GM12878 (cell line): ENCODE measurements at regions of chr1 and their contacts with region 1.

Region 1: DNA sequence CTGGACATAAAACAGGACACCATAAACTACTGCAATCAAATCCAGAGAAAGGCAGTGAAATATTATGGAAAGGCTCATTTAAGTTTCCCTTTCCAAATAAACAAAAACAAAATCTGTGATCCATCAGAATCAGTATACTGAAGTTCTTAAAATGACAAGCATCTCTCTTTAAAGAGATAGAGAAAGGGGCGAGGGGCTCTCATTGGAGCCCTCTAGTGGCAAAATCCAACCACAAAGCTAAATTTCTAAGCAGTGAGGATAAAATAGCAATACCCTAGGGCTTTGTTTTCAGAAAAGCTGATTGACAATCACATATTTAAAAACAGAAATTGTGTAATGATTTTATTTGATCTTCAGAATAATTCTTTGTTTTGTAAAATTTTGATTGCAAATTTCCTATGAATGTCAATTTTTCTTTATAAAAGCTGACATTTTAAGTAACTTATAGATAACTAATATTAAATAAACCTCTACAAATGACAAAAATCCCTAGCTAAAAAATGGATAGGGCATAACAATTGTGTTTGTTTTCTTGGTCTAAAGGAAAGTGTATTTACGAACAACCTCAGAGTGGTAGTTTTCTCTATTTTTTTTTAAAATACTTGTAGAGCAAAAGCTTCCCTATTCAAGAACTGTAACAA is 138.2 kb downstream of the COL24A1 start:
- DNase-seq: no peak
- ATAC-seq: peak; percentile 80
- H3K4me3 ChIP-seq: no peak overlapping the region
- H3K27ac ChIP-seq: no peak overlapping the region; the same call in 1 of the 2 replicates
- H3K4me1 ChIP-seq: peaks cover 16% of the 10 kb centered on the region; the same call in 1 of the 2 replicates
- H3K27me3 ChIP-seq: no peaks in the 10 kb centered on the region
- CTCF ChIP-seq: peak; percentile 68 to 75 (median 71)
- EP300 ChIP-seq: no peak
- POLR2A ChIP-seq: no peak
- RAD21 ChIP-seq: peak; percentile 81

Region 2: DNA sequence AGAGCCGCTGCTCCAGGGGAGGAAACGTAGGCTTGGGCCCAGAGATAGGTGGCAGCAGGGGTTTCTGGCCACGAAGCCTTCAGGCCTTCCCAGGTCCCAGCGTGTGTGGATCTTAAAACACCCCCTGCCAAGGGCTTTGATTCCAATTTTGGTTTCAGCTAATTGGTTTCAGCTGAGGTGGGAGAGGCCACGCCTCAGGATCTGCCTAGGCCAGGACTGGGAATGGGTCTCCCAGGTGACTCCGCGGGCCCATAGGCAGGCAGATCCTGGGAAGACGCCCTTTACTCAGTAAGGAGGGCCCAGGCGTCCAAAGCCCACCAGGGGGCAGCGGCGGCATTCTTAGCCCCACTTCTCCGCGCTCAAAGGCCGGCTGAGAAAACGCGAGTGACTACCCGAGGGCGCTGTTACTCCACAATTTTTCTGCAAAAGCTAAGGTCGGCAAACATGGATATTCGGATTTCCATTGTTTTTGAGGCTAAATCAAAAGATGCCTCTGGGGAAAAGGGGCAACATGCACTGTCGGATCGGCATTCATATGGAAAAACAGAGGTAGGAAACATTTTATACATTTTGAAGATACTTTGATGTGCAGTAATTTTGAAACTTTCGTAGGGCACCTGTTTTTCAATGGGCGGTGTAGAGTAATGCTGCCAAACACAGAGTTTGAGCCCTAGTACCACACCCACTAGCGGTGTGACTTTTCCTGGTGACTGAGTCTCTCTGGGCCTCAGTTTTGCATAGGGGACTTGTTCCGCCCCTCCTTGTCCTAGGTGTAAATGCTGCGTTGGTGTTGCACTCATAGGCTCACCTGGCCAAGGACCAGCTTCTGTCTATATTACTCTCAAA is 710.2 kb before region 1 on chr1:
- CTCF ChIA-PET with region 1: interaction called, 12 read pairs
- POLR2A ChIA-PET with region 1: no interaction called
- RAD21 ChIA-PET with region 1: interaction called, 6 read pairs
- SMC1A ChIA-PET with region 1: interaction called, 9 read pairs
- in situ Hi-C with region 1: loop called (anchors 25 kb)
- intact Hi-C with region 1: loop called (anchors 2 kb)
- DNase-seq: no peak
- ATAC-seq: peak; percentile 98
- H3K4me3 ChIP-seq: no peak overlapping the region
- H3K27ac ChIP-seq: no peak overlapping the region
- H3K4me1 ChIP-seq: peaks cover 5% of the 10 kb centered on the region
- H3K27me3 ChIP-seq: peaks cover 0 to 4% of the 10 kb centered on the region in 2 experiments; a peak in 2 of 4 replicates
- CTCF ChIP-seq: peak; percentile 88 to 91 (median 90)
- EP300 ChIP-seq: no peak
- POLR2A ChIP-seq: no peak
- RAD21 ChIP-seq: peak; percentile 86

Region 3: DNA sequence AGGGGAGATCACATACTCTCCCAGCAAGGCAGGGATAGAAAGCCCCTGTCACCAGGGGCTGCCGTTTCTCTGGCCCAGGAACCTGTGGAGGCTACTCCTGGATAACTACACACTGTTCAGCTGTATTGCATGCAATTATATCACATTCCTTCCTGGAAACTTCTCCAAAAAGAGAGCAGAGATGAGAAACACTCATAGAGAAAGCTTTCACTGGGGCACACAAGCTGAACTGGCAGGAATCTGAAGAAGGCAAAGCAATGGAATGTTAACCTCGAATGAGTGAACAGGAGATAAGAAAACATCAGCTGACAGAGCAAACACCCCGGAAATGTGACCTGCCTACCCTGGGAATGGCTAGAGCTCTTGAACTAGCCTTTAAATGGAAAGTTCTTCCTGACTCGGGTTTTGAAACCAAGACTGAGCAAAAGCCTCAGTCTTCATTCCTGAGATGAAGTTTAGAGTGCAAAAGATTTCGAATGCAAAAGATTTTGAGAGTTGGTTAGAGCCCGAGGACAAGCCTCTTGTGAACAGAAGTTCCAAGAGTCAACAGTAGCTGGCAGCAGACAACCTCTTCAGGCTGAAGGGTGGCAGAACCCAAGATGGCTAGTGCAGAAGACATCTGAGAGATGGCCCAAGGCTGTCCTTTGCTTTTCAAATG is 405.6 kb before region 1 on chr1:
- CTCF ChIA-PET with region 1: interaction called, 10 read pairs
- POLR2A ChIA-PET with region 1: no interaction called
- RAD21 ChIA-PET with region 1: no interaction called
- SMC1A ChIA-PET with region 1: interaction called, 4 read pairs
- in situ Hi-C with region 1: no loop called
- intact Hi-C with region 1: loop called (anchors 5 kb)
- DNase-seq: no peak
- ATAC-seq: peak; percentile 52
- H3K4me3 ChIP-seq: no peak overlapping the region
- H3K27ac ChIP-seq: no peak overlapping the region
- H3K4me1 ChIP-seq: no peaks in the 10 kb centered on the region
- H3K27me3 ChIP-seq: no peaks in the 10 kb centered on the region
- CTCF ChIP-seq: peak; percentile 25 to 47 (median 44); a peak in 4 of 6 replicates
- EP300 ChIP-seq: no peak
- POLR2A ChIP-seq: no peak
- RAD21 ChIP-seq: peak; percentile 64

Region 4: DNA sequence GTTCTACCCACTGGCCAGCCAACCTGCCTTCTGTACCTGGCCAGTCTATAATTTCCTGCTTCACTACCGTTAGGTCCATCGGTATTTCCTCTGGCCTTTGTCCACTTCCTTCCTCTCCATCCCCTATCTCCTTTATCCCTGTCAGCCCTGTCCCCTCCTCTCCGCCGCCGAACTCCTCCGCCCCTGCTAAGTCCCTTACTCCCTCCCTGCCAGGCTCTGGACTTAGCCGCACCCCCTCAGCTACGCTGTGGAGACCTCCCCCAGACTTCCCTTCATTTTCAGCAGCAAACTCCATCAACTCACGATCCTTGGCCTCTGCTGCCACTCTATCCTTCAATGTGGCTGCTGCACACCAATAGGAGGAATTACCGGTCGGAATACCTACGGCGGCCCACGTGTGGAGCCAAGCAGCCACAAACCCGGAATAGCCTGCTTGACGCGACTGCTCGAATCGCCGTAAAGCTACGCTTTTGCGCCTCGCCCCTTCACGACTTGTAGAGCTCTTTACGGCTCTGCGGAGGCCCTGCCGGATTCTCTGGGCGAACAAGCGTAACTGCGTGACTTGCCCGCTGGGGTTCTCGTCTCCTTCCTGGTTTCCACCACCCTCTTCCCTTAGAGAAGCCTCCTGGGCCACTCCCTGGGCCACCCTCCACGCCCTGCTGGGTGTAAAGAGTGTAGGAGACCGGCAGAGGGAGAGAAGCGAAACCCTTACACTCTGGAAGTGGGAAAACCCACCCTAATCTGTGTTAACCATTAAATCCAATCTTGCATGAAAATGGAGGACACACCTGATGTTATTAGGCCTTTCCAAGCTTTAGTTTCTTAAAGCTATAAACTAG is 310.2 kb before region 1 on chr1 and contains the start of gene ZNHIT6:
- CTCF ChIA-PET with region 1: interaction called, 3 read pairs
- POLR2A ChIA-PET with region 1: no interaction called
- RAD21 ChIA-PET with region 1: no interaction called
- SMC1A ChIA-PET with region 1: no interaction called
- in situ Hi-C with region 1: no loop called
- intact Hi-C with region 1: loop called (anchors 5 kb)
- DNase-seq: peak; percentile 82
- ATAC-seq: peak; percentile 92
- H3K4me3 ChIP-seq: peak within 1 kb of the TSS; percentile 89
- H3K27ac ChIP-seq: peak within 1 kb of the TSS; percentile 69
- H3K4me1 ChIP-seq: no peaks in the 10 kb centered on the region
- H3K27me3 ChIP-seq: no peaks in the 10 kb centered on the region
- CTCF ChIP-seq: peak; percentile 3 to 46 (median 38); a peak in 3 of 6 replicates
- EP300 ChIP-seq: no peak; a peak in 1 of 4 replicates
- POLR2A ChIP-seq: peak; percentile 84
- RAD21 ChIP-seq: 0 out of 2 replicates have a peak, but pooled peaks have one; percentile 18
- polyA plus RNA-seq, gene ZNHIT6: 14.3 to 20.2 TPM

Region 5: GRCh38 chr1:85718678-85719340 is 299.6 kb before region 1 on chr1:
- CTCF ChIA-PET with region 1: no interaction called
- POLR2A ChIA-PET with region 1: no interaction called
- RAD21 ChIA-PET with region 1: no interaction called
- SMC1A ChIA-PET with region 1: no interaction called
- in situ Hi-C with region 1: no loop called
- intact Hi-C with region 1: no loop called
- DNase-seq: no peak
- ATAC-seq: no peak
- H3K4me3 ChIP-seq: no peak overlapping the region
- H3K27ac ChIP-seq: no peak overlapping the region
- H3K4me1 ChIP-seq: no peaks in the 10 kb centered on the region
- H3K27me3 ChIP-seq: no peaks in the 10 kb centered on the region
- CTCF ChIP-seq: no peak
- EP300 ChIP-seq: no peak
- POLR2A ChIP-seq: no peak
- RAD21 ChIP-seq: no peak

Region 6: GRCh38 chr1:85894651-85895050 is 123.8 kb before region 1 on chr1:
- CTCF ChIA-PET with region 1: interaction called, 54 read pairs
- POLR2A ChIA-PET with region 1: no interaction called
- RAD21 ChIA-PET with region 1: interaction called, 11 read pairs
- SMC1A ChIA-PET with region 1: interaction called, 30 read pairs
- in situ Hi-C with region 1: loop called (anchors 5 kb)
- intact Hi-C with region 1: loop called (anchors 1 kb)
- DNase-seq: peak; percentile 3
- ATAC-seq: peak; percentile 76
- H3K4me3 ChIP-seq: no peak overlapping the region
- H3K27ac ChIP-seq: no peak overlapping the region
- H3K4me1 ChIP-seq: no peaks in the 10 kb centered on the region
- H3K27me3 ChIP-seq: no peaks in the 10 kb centered on the region
- CTCF ChIP-seq: peak; percentile 44 to 50 (median 48); a peak in 5 of 6 replicates
- EP300 ChIP-seq: no peak
- POLR2A ChIP-seq: no peak
- RAD21 ChIP-seq: peak; percentile 65

Region 7: DNA sequence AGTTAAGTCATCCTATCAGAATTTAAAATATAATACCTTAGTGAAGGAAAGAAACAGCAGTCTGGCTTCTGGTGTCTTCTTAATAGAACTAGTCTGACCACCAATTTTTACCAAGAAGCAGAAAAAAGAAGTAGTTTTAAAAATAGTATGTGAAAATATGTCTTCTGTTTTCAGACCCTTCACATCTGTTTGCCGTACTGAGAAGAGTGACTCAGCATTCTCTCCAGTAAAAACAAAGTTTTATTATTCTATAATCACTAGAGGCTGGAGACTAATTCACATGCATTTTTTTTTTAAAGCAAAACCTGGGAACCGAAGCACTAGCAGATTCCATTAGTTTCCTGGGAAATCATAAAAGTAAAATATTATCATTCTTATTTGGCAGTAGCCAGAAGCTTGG is 25.6 kb before region 1 on chr1:
- CTCF ChIA-PET with region 1: interaction called, 17 read pairs
- POLR2A ChIA-PET with region 1: no interaction called
- RAD21 ChIA-PET with region 1: interaction called, 4 read pairs
- SMC1A ChIA-PET with region 1: interaction called, 7 read pairs
- in situ Hi-C with region 1: no loop called
- intact Hi-C with region 1: no loop called
- DNase-seq: no peak
- ATAC-seq: peak; percentile 63
- H3K4me3 ChIP-seq: peak overlapping the region; percentile 3; the same call in 1 of the 2 replicates
- H3K27ac ChIP-seq: peak overlapping the region; percentile 83
- H3K4me1 ChIP-seq: peaks cover 32% of the 10 kb centered on the region
- H3K27me3 ChIP-seq: no peaks in the 10 kb centered on the region
- CTCF ChIP-seq: no peak
- EP300 ChIP-seq: no peak
- POLR2A ChIP-seq: no peak
- RAD21 ChIP-seq: no peak

Region 8: GRCh38 chr1:86035101-86035500 is 16.7 kb after region 1 on chr1:
- CTCF ChIA-PET with region 1: interaction called, 21 read pairs
- POLR2A ChIA-PET with region 1: no interaction called
- RAD21 ChIA-PET with region 1: interaction called, 3 read pairs
- SMC1A ChIA-PET with region 1: interaction called, 4 read pairs
- in situ Hi-C with region 1: no loop called
- intact Hi-C with region 1: no loop called
- DNase-seq: no peak
- ATAC-seq: no peak
- H3K4me3 ChIP-seq: no peak overlapping the region
- H3K27ac ChIP-seq: no peak overlapping the region
- H3K4me1 ChIP-seq: no peaks in the 10 kb centered on the region
- H3K27me3 ChIP-seq: no peaks in the 10 kb centered on the region
- CTCF ChIP-seq: no peak
- EP300 ChIP-seq: no peak
- POLR2A ChIP-seq: no peak
- RAD21 ChIP-seq: no peak